Endothelial cell of umbilical vein (primary cell): ENCODE measurements at regions of chr16 and their contacts with region 1.

Region 1: DNA sequence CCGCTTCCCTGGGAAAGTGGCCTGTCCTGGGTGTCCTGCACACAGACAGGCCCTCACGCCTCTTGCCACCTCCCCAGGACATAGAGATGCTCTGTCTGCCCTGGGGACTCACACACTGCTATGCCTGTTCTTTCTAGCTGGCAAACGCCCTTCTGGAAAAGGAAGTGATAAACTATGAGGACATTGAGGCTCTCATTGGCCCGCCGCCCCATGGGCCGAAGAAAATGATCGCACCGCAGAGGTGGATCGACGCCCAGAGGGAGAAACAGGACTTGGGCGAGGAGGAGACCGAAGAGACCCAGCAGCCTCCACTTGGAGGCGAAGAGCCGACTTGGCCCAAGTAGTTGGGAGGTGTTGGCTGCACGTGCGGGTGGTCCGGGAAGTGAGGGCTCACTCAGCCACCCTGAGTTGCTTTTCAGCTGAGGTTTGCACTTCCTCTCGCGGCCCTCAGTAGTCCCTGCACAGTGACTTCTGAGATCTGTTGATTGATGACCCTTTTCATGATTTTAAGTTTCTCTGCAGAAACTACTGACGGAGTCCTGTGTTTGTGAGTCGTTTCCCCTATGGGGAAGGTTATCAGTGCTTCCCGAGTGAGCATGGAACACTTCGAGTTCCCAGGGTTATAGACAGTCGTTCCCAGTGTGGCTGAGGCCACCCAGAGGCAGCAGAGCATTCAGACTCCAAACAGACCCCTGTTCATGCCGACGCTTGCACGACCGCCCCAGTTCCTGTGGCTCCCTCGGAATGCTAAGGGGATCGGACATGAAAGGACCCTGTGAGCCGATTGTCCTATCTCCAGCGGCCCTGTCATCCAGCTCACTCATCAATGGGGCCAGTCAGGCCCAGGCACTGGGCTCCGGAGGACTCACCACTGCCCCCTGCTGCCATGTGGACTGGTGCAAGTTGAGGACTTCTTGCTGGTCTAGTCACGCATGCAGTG is 3.5 kb upstream of the RPL13 start:
- DNase-seq: peak; percentile 85
- H3K4me3 ChIP-seq: no peak overlapping the region
- H3K27ac ChIP-seq: no peak overlapping the region
- H3K4me1 ChIP-seq: peaks cover 6% of the 10 kb centered on the region
- H3K27me3 ChIP-seq: no peaks in the 10 kb centered on the region
- CTCF ChIP-seq: peak; percentile 88 to 93
- POLR2A ChIP-seq: no peak

Region 2: GRCh38 chr16:89523680-89524344 is 33.2 kb before region 1 on chr16:
- CTCF ChIA-PET with region 1: interaction called, 7 read pairs
- POLR2A ChIA-PET with region 1: no interaction called
- dilution Hi-C with region 1: no loop called
- intact Hi-C with region 1: loop called (anchors 5 kb)
- DNase-seq: peak; percentile 63
- H3K4me3 ChIP-seq: no peak overlapping the region
- H3K27ac ChIP-seq: peak overlapping the region; percentile 30
- H3K4me1 ChIP-seq: peaks cover 12% of the 10 kb centered on the region
- H3K27me3 ChIP-seq: no peaks in the 10 kb centered on the region
- CTCF ChIP-seq: no peak
- POLR2A ChIP-seq: no peak

Region 3: DNA sequence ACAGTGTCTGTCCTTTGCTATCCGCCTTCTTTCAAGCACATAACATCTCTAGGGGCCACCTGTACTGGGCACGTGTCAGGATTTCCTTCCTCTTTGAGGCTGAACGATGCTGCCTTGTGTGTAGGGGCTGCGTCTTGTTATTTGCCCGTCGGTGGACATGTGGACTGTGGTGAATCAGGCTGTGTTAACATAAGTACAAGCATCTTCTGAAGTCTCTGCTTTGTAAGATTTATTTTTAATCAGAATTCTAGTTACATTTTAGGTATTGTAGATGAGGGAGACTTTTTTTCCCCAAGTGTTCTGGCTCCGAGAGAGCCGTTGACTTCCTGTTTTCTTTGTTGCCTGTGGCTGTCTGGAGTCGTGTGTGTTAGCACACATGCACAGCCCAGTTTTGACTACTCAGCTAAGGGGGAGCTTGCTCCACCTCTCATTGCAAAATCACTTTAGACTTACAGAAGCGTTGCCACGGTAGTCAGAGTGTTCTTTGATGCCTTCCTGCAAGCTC is 22.7 kb before region 1 on chr16:
- CTCF ChIA-PET with region 1: interaction called, 7 read pairs
- POLR2A ChIA-PET with region 1: interaction called, 6 read pairs
- dilution Hi-C with region 1: no loop called
- intact Hi-C with region 1: loop called (anchors 2 kb)
- DNase-seq: peak; percentile 63
- H3K4me3 ChIP-seq: no peak overlapping the region
- H3K27ac ChIP-seq: no peak overlapping the region
- H3K4me1 ChIP-seq: peaks cover 17% of the 10 kb centered on the region
- H3K27me3 ChIP-seq: no peaks in the 10 kb centered on the region
- CTCF ChIP-seq: no peak
- POLR2A ChIP-seq: no peak